Naive thymus-derived CD4-positive, alpha-beta T cell (primary cell): ENCODE measurements at regions of chr14 and their contacts with region 1.

Region 1: GRCh38 chr14:105020815-105021655 is at the start of gene CDCA4:
- DNase-seq: peak; percentile 93 to 98 (median 97)
- ATAC-seq: peak; percentile 91
- H3K4me3 ChIP-seq: peak within 1 kb of the TSS; percentile 97
- H3K4me3 Mint-ChIP-seq: peak within 1 kb of the TSS; percentile 88 to 99 (median 92)
- H3K27ac ChIP-seq: peak within 1 kb of the TSS; percentile 94
- H3K27ac Mint-ChIP-seq: peak within 1 kb of the TSS; percentile 81 to 97 (median 92)
- H3K4me1 ChIP-seq: peaks cover 25 to 54% of the 10 kb centered on the region in 2 donors
- H3K4me1 Mint-ChIP-seq: peaks cover 38 to 62% (median 41%) of the 10 kb centered on the region in 7 donors
- H3K27me3 ChIP-seq: no peaks in the 10 kb centered on the region
- H3K27me3 Mint-ChIP-seq: no peaks in the 10 kb centered on the region
- total RNA-seq, gene CDCA4: 12.7 to 47.8 (median 14.0) TPM

Region 2: DNA sequence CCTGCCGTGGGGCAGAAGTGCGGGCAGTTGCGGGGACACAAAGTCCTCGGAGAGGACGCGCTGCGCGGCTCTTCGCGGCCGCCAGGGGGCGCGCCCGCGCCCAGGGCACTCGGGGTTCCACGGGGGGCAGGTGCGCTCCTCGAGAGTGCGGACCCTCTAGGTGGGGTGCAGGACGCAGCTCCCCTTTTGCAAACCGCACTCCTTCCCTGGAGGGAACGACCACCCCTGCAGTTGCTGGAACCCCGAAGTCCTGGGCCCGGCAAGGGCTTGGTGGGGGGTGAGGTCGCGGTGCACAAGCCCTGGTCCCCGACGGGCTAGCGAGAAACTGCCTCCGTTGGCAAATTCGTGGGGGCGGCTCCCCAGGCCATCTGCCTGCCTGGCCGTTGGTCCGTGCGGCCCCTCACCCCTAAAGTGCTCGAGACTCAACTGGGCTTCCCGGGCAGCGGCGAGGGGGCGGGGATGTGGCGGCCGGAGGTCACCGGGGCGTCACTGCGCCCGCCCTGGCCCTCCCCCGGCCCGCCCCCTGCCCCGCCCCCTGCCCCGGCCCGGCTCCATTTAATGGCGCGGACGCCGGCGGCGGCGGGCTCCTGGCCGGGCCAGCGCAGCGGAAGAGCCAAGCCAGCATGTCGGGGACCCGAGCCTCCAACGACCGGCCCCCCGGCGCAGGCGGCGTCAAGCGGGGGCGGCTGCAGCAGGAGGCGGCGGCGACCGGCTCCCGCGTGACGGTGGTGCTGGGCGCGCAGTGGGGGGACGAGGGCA is 297.2 kb before region 1 on chr14 and contains the start of gene ADSS1:
- CTCF ChIA-PET with region 1: no interaction called
- POLR2A ChIA-PET with region 1: no interaction called
- intact Hi-C with region 1: loop called in 1 of 2 experiments (anchors 1 kb)
- DNase-seq: peak; percentile 39 to 79 (median 68)
- ATAC-seq: peak; percentile 89
- H3K4me3 ChIP-seq: peak within 1 kb of the TSS; percentile 70
- H3K4me3 Mint-ChIP-seq: peak within 1 kb of the TSS; percentile 43 to 80 (median 63)
- H3K27ac ChIP-seq: peak within 1 kb of the TSS; percentile 58
- H3K27ac Mint-ChIP-seq: peak within 1 kb of the TSS in 1 of 9 donors; percentile 22
- H3K4me1 ChIP-seq: peaks cover 0 to 6% of the 10 kb centered on the region in 2 donors
- H3K4me1 Mint-ChIP-seq: peaks cover 0 to 7% (median 0%) of the 10 kb centered on the region in 7 donors
- H3K27me3 ChIP-seq: no peaks in the 10 kb centered on the region
- H3K27me3 Mint-ChIP-seq: no peaks in the 10 kb centered on the region
- total RNA-seq, gene ADSS1: 0.73 to 4.8 (median 4.2) TPM

Region 3: GRCh38 chr14:104932676-104933631 is 88.1 kb before region 1 on chr14:
- CTCF ChIA-PET with region 1: no interaction called
- POLR2A ChIA-PET with region 1: interaction called, 3 read pairs
- intact Hi-C with region 1: loop called in 1 of 2 experiments (anchors 1 kb)
- DNase-seq: peak; percentile 62 to 91 (median 83)
- ATAC-seq: peak; percentile 94
- H3K4me3 ChIP-seq: peak overlapping the region; percentile 20
- H3K4me3 Mint-ChIP-seq: peak overlapping the region in 8 of 10 donors; percentile 44 to 76 (median 64)
- H3K27ac ChIP-seq: peak overlapping the region; percentile 29
- H3K27ac Mint-ChIP-seq: no peak overlapping the region
- H3K4me1 ChIP-seq: peaks cover 0 to 4% of the 10 kb centered on the region in 2 donors
- H3K4me1 Mint-ChIP-seq: peaks cover 4 to 11% (median 8%) of the 10 kb centered on the region in 7 donors
- H3K27me3 ChIP-seq: no peaks in the 10 kb centered on the region
- H3K27me3 Mint-ChIP-seq: peaks cover 0 to 26% (median 4%) of the 10 kb centered on the region in 5 donors

Region 4: DNA sequence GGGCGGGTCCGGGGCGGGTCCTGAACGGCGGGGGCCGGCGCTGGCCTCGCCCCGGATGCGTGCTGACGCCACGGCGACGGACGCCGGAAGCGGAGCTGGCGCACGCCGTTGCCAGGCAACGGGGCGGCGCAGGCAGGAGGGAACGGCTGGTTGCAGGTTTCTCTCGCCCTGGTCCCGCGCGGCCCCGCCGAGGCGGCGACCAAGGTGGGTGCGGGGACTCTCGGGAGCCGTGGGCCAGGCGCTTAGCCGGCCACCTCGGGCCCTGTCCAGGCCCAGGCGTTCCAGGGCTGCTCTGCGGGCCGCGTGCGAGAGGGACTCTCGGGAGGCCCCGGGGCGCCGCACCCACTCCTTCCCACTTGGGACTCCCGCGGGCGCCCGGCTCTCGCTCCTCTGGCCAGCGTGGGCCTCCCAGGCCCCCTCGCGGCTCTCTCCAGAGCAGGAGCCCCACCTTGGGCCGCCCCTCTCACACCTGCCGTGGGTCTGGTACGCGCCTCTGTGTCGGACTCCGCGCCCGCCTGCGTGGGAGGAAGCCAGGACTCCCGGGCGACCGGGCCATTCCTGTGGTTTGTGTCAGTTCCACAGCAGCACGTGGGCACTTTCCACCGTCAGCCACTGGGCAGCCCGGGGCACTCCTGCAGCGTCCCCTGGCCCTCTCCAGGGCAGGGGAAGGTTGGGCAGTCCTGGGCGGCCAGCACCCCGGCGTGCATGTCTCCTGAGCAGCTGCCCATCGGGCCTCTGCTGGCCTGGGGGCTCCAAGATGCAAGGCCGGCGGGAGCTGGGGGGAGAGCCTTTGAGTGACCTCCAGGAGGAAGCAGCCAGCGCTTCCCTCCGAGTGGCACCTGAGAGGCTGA is 35.1 kb before region 1 on chr14 and contains the start of gene CLBA1:
- CTCF ChIA-PET with region 1: no interaction called
- POLR2A ChIA-PET with region 1: interaction called, 5 read pairs
- intact Hi-C with region 1: loop called (anchors 1 kb)
- DNase-seq: peak; percentile 81 to 90 (median 89)
- ATAC-seq: peak; percentile 96
- H3K4me3 ChIP-seq: peak within 1 kb of the TSS; percentile 56
- H3K4me3 Mint-ChIP-seq: peak within 1 kb of the TSS; percentile 64 to 86 (median 76)
- H3K27ac ChIP-seq: peak within 1 kb of the TSS; percentile 72
- H3K27ac Mint-ChIP-seq: peak within 1 kb of the TSS in 8 of 9 donors; percentile 74 to 89 (median 86)
- H3K4me1 ChIP-seq: no peaks in the 10 kb centered on the region
- H3K4me1 Mint-ChIP-seq: peaks cover 0 to 9% (median 4%) of the 10 kb centered on the region in 7 donors
- H3K27me3 ChIP-seq: no peaks in the 10 kb centered on the region
- H3K27me3 Mint-ChIP-seq: peaks cover 0 to 5% (median 4%) of the 10 kb centered on the region in 5 donors
- total RNA-seq, gene CLBA1: 0.51 to 2.1 (median 1.3) TPM

Region 5: GRCh38 chr14:105045710-105046326 is 24.8 kb after region 1 on chr14:
- CTCF ChIA-PET with region 1: interaction called, 10 read pairs
- POLR2A ChIA-PET with region 1: no interaction called
- intact Hi-C with region 1: loop called (anchors 1 kb)
- DNase-seq: peak; percentile 83 to 96 (median 89)
- ATAC-seq: peak; percentile 98
- H3K4me3 ChIP-seq: no peak overlapping the region
- H3K4me3 Mint-ChIP-seq: peak overlapping the region in 7 of 10 donors; percentile 16 to 56 (median 44)
- H3K27ac ChIP-seq: peak overlapping the region; percentile 46
- H3K27ac Mint-ChIP-seq: peak overlapping the region; percentile 11 to 92 (median 87)
- H3K4me1 ChIP-seq: peaks cover 0 to 9% of the 10 kb centered on the region in 2 donors
- H3K4me1 Mint-ChIP-seq: peaks cover 5 to 14% (median 10%) of the 10 kb centered on the region in 7 donors
- H3K27me3 ChIP-seq: no peaks in the 10 kb centered on the region
- H3K27me3 Mint-ChIP-seq: peaks cover 0 to 7% (median 0%) of the 10 kb centered on the region in 5 donors

Region 6: DNA sequence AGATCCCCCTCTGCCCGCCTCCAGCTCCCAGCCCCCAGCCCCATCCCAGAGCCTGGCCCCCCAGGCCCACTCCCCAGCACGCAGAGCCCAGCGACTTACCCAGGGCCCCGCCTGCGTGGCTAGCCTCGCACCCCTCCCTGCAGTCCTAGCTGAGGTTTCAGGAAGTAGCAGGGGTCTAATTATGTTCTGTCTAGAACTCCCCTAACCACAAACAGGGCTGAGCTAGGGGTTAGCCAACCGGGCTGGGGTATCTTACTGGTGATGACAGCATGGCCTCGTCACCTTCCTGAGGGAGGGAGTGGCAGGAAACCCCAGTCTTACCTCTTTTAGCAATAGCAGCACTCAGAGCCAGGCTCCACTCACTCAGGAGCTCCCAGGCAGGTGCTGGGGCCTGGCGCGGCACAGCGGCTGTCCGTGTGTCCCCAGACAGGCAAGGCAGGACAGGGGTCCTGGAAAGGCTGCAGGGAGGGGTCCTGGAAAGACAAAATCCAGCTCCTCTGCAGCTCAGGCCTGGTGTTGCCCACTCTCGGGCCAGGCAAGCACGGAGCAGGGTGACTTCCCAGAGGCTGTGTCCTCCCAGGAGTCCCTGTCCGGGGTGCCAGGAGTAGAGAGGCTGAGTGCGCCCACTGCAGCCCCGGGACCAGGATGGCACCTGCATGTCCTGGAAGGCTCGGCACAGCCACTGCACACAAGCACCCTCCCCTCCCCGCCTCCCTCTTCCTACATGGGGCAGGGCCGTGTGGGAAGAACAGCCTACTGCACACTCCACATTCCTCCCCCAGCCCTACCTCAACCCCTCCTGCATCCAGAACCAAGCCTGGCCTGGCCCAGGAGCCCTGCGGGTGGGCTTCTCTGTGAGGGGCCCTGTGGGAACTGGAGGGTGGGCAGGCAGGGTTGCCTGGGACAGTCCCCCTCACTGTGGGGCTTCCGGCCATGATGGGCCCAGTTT is 44.5 kb after region 1 on chr14 and contains the start of gene GPR132:
- CTCF ChIA-PET with region 1: no interaction called
- POLR2A ChIA-PET with region 1: interaction called, 8 read pairs
- intact Hi-C with region 1: loop called (anchors 1 kb)
- DNase-seq: peak; percentile 73 to 99 (median 96)
- ATAC-seq: peak; percentile 93
- H3K4me3 ChIP-seq: peak within 1 kb of the TSS; percentile 97
- H3K4me3 Mint-ChIP-seq: peak within 1 kb of the TSS; percentile 82 to 96 (median 90)
- H3K27ac ChIP-seq: peak within 1 kb of the TSS; percentile 96
- H3K27ac Mint-ChIP-seq: peak within 1 kb of the TSS; percentile 93 to 99 (median 98)
- H3K4me1 ChIP-seq: peaks cover 66 to 80% of the 10 kb centered on the region in 2 donors
- H3K4me1 Mint-ChIP-seq: peaks cover 36 to 85% (median 58%) of the 10 kb centered on the region in 7 donors
- H3K27me3 ChIP-seq: no peaks in the 10 kb centered on the region
- H3K27me3 Mint-ChIP-seq: no peaks in the 10 kb centered on the region
- total RNA-seq, gene GPR132: 37.8 to 58.7 (median 45.2) TPM